H1 (cell line): ENCODE measurements at regions of chr1 and their contacts with region 1.

Region 1: GRCh38 chr1:178619042-178619927 is 105.8 kb upstream of the RALGPS2 start:
- DNase-seq: no peak
- H3K4me3 ChIP-seq: no peak overlapping the region
- H3K27ac ChIP-seq: no peak overlapping the region
- H3K4me1 ChIP-seq: no peaks in the 10 kb centered on the region
- H3K27me3 ChIP-seq: no peaks in the 10 kb centered on the region
- CTCF ChIP-seq: no peak
- EP300 ChIP-seq: no peak
- POLR2A ChIP-seq: no peak
- RAD21 ChIP-seq: no peak

Region 2: GRCh38 chr1:178599745-178600144 is 19.5 kb before region 1 on chr1:
- CTCF ChIA-PET with region 1: interaction called, 10 read pairs
- POLR2A ChIA-PET with region 1: no interaction called
- DNase-seq: no peak
- H3K4me3 ChIP-seq: no peak overlapping the region
- H3K27ac ChIP-seq: no peak overlapping the region
- H3K4me1 ChIP-seq: no peaks in the 10 kb centered on the region
- H3K27me3 ChIP-seq: no peaks in the 10 kb centered on the region
- CTCF ChIP-seq: no peak
- EP300 ChIP-seq: no peak
- POLR2A ChIP-seq: no peak
- RAD21 ChIP-seq: no peak

Region 3: GRCh38 chr1:178768423-178768822 is 149.1 kb after region 1 on chr1:
- CTCF ChIA-PET with region 1: no interaction called
- POLR2A ChIA-PET with region 1: no interaction called
- DNase-seq: peak in 1 of 2 experiments; percentile 50
- H3K4me3 ChIP-seq: no peak overlapping the region
- H3K27ac ChIP-seq: no peak overlapping the region
- H3K4me1 ChIP-seq: peaks cover 0 to 4% (median 0%) of the 10 kb centered on the region in 4 experiments; a peak in 1 of 7 replicates
- H3K27me3 ChIP-seq: no peaks in the 10 kb centered on the region
- CTCF ChIP-seq: peak; percentile 38 to 89 (median 83)
- EP300 ChIP-seq: no peak
- POLR2A ChIP-seq: no peak
- RAD21 ChIP-seq: peak; percentile 70 to 83

Region 4: DNA sequence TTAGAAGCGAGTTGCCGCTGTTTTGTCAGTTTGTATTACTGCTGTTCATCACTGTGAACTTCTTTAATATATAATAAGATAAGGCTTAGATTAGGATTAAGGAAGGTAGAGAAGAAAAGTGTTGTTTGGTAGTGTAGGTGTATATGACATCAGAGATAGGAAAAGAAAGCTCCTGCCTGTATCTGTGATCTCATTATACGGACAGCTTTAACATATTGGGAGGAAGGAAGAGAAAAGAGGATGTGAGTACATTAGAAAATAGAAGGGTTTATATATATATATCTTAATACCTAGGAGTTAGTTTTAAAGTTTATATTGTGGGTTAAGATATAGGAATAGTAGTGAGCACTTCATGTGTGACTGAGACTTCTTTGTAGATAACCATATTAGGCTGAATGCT is 176.7 kb after region 1 on chr1:
- CTCF ChIA-PET with region 1: no interaction called
- POLR2A ChIA-PET with region 1: no interaction called
- DNase-seq: no peak
- H3K4me3 ChIP-seq: no peak overlapping the region
- H3K27ac ChIP-seq: no peak overlapping the region
- H3K4me1 ChIP-seq: no peaks in the 10 kb centered on the region
- H3K27me3 ChIP-seq: no peaks in the 10 kb centered on the region
- CTCF ChIP-seq: no peak
- EP300 ChIP-seq: no peak
- POLR2A ChIP-seq: no peak
- RAD21 ChIP-seq: no peak